Activated CD4-positive, alpha-beta T cell treated with anti-CD3 and anti-CD28 coated beads for 36 hours (primary cell): ENCODE measurements at regions of chr5 and their contacts with region 1.

Region 1: GRCh38 chr5:54905943-54906537 is 79.4 kb downstream of the ESM1 start:
- DNase-seq: peak; percentile 84
- ATAC-seq: no peak
- H3K4me3 Mint-ChIP-seq: no peak overlapping the region
- H3K27ac Mint-ChIP-seq: no peak overlapping the region
- H3K4me1 Mint-ChIP-seq: peaks cover 11% of the 10 kb centered on the region
- H3K27me3 Mint-ChIP-seq: peaks cover 40% of the 10 kb centered on the region

Region 2: DNA sequence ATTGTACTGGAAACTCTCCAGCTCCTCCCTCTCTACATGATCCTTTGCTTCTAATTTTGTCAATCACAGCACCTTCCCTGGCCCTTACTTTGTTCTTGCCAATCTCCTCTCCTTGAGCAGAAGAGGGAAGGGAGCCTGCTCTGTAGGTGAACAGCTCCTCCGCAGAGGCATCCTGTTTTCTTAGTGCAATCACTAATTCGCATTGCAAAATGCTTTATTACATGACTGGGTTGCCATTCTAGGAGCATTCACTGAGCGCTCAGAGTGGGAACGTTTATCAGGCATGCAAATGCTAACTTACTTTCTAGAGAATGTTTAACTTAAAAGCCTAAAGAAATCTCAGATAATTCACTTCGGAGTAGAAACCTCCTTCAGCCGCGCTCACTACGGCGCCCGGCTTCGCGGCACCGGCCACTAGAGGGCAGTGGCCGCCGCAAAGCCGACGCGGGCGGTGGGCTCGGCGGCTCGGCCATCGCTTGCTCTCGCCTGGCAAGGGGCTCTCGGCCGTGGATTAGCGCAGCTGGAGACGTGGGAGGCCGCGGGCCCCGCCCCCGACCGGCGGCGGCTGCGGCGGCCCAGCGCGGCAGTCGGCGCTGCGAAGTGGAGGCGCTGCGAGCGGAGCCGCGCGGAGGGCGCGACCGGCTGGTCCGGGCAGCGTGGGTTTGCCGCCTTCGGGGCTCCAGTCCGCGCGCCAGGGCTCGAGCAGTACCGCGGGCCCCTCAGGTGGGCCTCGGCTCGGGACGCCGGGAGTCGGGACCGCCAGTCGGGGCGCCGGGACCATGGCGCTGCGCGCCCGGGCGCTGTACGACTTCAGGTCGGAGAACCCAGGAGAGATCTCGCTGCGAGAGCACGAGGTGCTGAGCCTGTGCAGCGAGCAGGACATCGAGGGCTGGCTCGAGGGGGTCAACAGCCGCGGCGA is 388.6 kb before region 1 on chr5 and contains the start of gene SNX18:
- CTCF ChIA-PET with region 1: interaction called, 9 read pairs
- POLR2A ChIA-PET with region 1: no interaction called
- intact Hi-C with region 1: loop called (anchors 1 to 2 kb)
- DNase-seq: peak; percentile 95
- ATAC-seq: peak; percentile 77
- H3K4me3 Mint-ChIP-seq: peak within 1 kb of the TSS; percentile 71
- H3K27ac Mint-ChIP-seq: no peak within 1 kb of the TSS
- H3K4me1 Mint-ChIP-seq: peaks cover 40% of the 10 kb centered on the region
- H3K27me3 Mint-ChIP-seq: no peaks in the 10 kb centered on the region
- total RNA-seq, gene SNX18: 4.6 to 4.7 TPM

Region 3: GRCh38 chr5:54944364-54944763 is 38.3 kb after region 1 on chr5:
- CTCF ChIA-PET with region 1: interaction called, 40 read pairs
- POLR2A ChIA-PET with region 1: no interaction called
- intact Hi-C with region 1: loop called in 1 of 2 experiments (anchors 1 kb)
- DNase-seq: peak; percentile 38
- ATAC-seq: peak; percentile 49
- H3K4me3 Mint-ChIP-seq: no peak overlapping the region
- H3K27ac Mint-ChIP-seq: no peak overlapping the region
- H3K4me1 Mint-ChIP-seq: no peaks in the 10 kb centered on the region
- H3K27me3 Mint-ChIP-seq: peaks cover 2% of the 10 kb centered on the region

Region 4: GRCh38 chr5:55037046-55037771 is 131.2 kb after region 1 on chr5:
- CTCF ChIA-PET with region 1: interaction called, 3 read pairs
- POLR2A ChIA-PET with region 1: no interaction called
- intact Hi-C with region 1: loop called in 1 of 2 experiments (anchors 1 kb)
- DNase-seq: peak; percentile 87
- ATAC-seq: peak; percentile 95
- H3K4me3 Mint-ChIP-seq: peak overlapping the region; percentile 16
- H3K27ac Mint-ChIP-seq: peak overlapping the region; percentile 82
- H3K4me1 Mint-ChIP-seq: peaks cover 28% of the 10 kb centered on the region
- H3K27me3 Mint-ChIP-seq: no peaks in the 10 kb centered on the region

Region 5: DNA sequence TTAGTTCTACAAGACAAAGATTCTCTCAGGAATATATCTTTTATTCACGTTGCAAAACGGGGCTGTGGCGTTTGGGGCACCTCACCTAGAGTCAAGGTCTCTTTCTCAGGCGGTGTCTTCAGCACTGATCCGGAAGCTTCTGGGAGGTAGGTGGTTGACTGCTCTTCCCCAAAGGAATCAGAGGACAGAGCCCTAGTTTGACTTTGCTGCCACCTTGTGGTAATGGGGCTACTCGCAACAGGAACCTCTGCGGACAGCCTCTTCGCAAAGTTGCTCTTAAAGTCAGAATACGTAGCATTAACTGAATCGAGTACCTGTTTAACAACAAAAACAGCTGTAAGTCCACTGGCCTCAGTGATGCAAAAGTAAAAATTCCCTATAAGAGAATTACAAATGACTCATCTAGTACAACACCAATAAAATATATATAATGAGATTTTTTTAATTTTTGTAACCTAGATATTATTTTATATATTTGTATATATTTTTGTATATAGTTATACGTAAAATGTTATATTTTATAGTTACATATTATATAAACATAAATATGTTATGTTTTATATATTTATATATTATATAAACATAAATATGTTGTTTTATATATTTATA is 240.6 kb after region 1 on chr5:
- CTCF ChIA-PET with region 1: interaction called, 32 read pairs
- POLR2A ChIA-PET with region 1: no interaction called
- intact Hi-C with region 1: loop called (anchors 1 kb)
- DNase-seq: peak; percentile 88
- ATAC-seq: peak; percentile 95
- H3K4me3 Mint-ChIP-seq: no peak overlapping the region
- H3K27ac Mint-ChIP-seq: no peak overlapping the region
- H3K4me1 Mint-ChIP-seq: peaks cover 15% of the 10 kb centered on the region
- H3K27me3 Mint-ChIP-seq: peaks cover 15% of the 10 kb centered on the region

Region 6: DNA sequence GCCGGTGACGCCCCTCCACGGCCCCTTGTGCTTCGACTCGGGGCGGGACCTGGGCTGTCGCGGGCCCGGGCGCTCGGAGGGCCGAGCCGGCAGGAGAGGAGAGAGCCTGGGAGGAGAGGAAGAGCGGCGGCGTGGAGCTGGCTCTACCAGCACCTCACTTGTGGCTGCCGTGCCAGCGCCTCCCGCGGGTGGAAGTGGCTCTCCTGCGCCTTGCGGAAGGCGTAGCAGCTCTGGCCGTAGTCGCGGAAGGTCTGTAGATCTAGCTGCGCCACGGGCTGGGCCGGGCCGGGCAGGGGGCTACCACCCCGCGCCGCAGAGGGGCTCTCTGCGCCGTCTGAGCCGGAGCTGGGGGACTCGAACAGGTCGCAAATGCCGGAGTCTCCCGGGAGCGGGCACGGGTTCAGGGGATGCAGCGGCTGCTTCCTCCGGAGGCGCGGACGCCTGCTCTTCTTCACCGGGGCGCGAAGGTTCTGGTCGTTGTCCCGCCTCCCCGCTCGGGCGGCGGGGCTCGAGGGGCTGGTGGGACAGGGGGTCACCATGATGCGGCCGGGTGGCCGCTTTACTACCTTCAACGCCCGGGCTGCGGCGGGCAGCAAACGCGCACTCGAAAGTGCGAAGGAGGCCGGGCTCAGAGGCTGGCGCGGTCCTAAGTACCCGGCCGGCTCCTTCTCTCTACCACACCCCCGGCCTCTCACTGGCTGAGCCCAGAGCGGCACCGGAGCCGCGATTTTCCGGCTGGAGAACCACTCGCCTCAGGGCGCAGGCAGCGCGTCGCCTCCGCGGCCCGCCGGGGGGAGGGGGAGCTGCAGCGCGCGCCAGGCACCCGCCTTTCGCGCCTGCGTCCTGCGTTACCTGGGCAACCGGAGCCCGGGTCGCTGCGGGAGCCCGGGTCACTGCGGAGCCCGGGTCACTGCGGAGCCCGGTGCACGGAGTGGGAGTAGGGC is 327.2 kb after region 1 on chr5 and contains the start of gene CCNO:
- CTCF ChIA-PET with region 1: interaction called, 3 read pairs
- POLR2A ChIA-PET with region 1: no interaction called
- intact Hi-C with region 1: loop called in 1 of 2 experiments (anchors 10 kb)
- DNase-seq: peak; percentile 75
- ATAC-seq: peak; percentile 79
- H3K4me3 Mint-ChIP-seq: peak within 1 kb of the TSS; percentile 73
- H3K27ac Mint-ChIP-seq: no peak within 1 kb of the TSS
- H3K4me1 Mint-ChIP-seq: peaks cover 30% of the 10 kb centered on the region
- H3K27me3 Mint-ChIP-seq: peaks cover 63% of the 10 kb centered on the region
- total RNA-seq, gene CCNO: not detected